ENCODE measurements at regions of chr2 and their contacts with region 1.

Region 1: GRCh38 chr2:177254433-177255226 is 9.9 kb downstream of the NFE2L2 start:
- DNase-seq: no peak
- H3K4me3 Mint-ChIP-seq: no peak overlapping the region
- H3K27ac Mint-ChIP-seq: peak overlapping the region; percentile 22
- H3K4me1 Mint-ChIP-seq: peaks cover 41% of the 10 kb centered on the region
- H3K27me3 Mint-ChIP-seq: no peaks in the 10 kb centered on the region
- CTCF ChIP-seq: no peak

Region 2: GRCh38 chr2:177239932-177240630 is 14.5 kb before region 1 on chr2:
- CTCF ChIA-PET with region 1: interaction called, 4 read pairs
- POLR2A ChIA-PET with region 1: interaction called, 49 read pairs
- intact Hi-C with region 1: no loop called
- DNase-seq: peak; percentile 28
- H3K4me3 Mint-ChIP-seq: peak overlapping the region; percentile 30
- H3K27ac Mint-ChIP-seq: peak overlapping the region; percentile 97
- H3K4me1 Mint-ChIP-seq: peaks cover 53% of the 10 kb centered on the region
- H3K27me3 Mint-ChIP-seq: no peaks in the 10 kb centered on the region
- CTCF ChIP-seq: no peak

Region 3: GRCh38 chr2:177275041-177276020 is 20.7 kb after region 1 on chr2:
- CTCF ChIA-PET with region 1: interaction called, 3 read pairs
- POLR2A ChIA-PET with region 1: interaction called, 192 read pairs
- intact Hi-C with region 1: no loop called
- DNase-seq: peak; percentile 93
- H3K4me3 Mint-ChIP-seq: peak overlapping the region; percentile 62
- H3K27ac Mint-ChIP-seq: peak overlapping the region; percentile 91
- H3K4me1 Mint-ChIP-seq: peaks cover 20% of the 10 kb centered on the region
- H3K27me3 Mint-ChIP-seq: no peaks in the 10 kb centered on the region
- CTCF ChIP-seq: no peak

Region 4: GRCh38 chr2:178072383-178073301 is 818.0 kb after region 1 on chr2 and contains the start of gene PDE11A:
- CTCF ChIA-PET with region 1: no interaction called
- POLR2A ChIA-PET with region 1: no interaction called
- intact Hi-C with region 1: no loop called
- DNase-seq: peak; percentile 87
- H3K4me3 Mint-ChIP-seq: peak within 1 kb of the TSS; percentile 79
- H3K27ac Mint-ChIP-seq: peak within 1 kb of the TSS; percentile 32
- H3K4me1 Mint-ChIP-seq: peaks cover 25% of the 10 kb centered on the region
- H3K27me3 Mint-ChIP-seq: peaks cover 47% of the 10 kb centered on the region
- CTCF ChIP-seq: no peak
- total RNA-seq, gene PDE11A: not detected in 2 replicates

Measured in MCF 10A (cell line).